ENCODE measurements at regions of chr1 and their contacts with region 1.

Region 1: GRCh38 chr1:51519048-51519864 is at the start of gene EPS15:
- DNase-seq: peak; percentile 70 to 78 (median 75)
- H3K4me3 ChIP-seq: peak within 1 kb of the TSS; percentile 72 to 96 (median 95)
- H3K4me3 Mint-ChIP-seq: peak within 1 kb of the TSS; percentile 92 to 98
- H3K27ac ChIP-seq: peak within 1 kb of the TSS; percentile 61 to 86
- H3K27ac Mint-ChIP-seq: peak within 1 kb of the TSS; percentile 88 to 98 (median 94)
- H3K4me1 ChIP-seq: peaks cover 21 to 42% of the 10 kb centered on the region in 2 donors
- H3K4me1 Mint-ChIP-seq: peaks cover 49% of the 10 kb centered on the region
- H3K27me3 ChIP-seq: no peaks in the 10 kb centered on the region
- H3K27me3 Mint-ChIP-seq: no peaks in the 10 kb centered on the region
- CTCF ChIP-seq: no peak
- polyA plus RNA-seq, gene EPS15: 26.7 to 53.6 (median 36.4) TPM

Region 2: GRCh38 chr1:50959913-50960844 is 559.1 kb before region 1 on chr1 and contains the start of gene FAF1:
- intact Hi-C with region 1: loop called in 1 of 2 experiments (anchors 10 kb)
- DNase-seq: peak; percentile 95 to 98 (median 96)
- H3K4me3 ChIP-seq: peak within 1 kb of the TSS; percentile 80 to 98 (median 81)
- H3K4me3 Mint-ChIP-seq: peak within 1 kb of the TSS; percentile 91 to 92
- H3K27ac ChIP-seq: peak within 1 kb of the TSS; percentile 72 to 83
- H3K27ac Mint-ChIP-seq: peak within 1 kb of the TSS; percentile 88 to 96 (median 92)
- H3K4me1 ChIP-seq: peaks cover 16 to 28% of the 10 kb centered on the region in 2 donors
- H3K4me1 Mint-ChIP-seq: peaks cover 23% of the 10 kb centered on the region
- H3K27me3 ChIP-seq: no peaks in the 10 kb centered on the region
- H3K27me3 Mint-ChIP-seq: peaks cover 0 to 2% (median 0%) of the 10 kb centered on the region in 3 donors
- CTCF ChIP-seq: no peak
- polyA plus RNA-seq, gene FAF1: 11.4 to 29.6 (median 16.9) TPM

Region 3: DNA sequence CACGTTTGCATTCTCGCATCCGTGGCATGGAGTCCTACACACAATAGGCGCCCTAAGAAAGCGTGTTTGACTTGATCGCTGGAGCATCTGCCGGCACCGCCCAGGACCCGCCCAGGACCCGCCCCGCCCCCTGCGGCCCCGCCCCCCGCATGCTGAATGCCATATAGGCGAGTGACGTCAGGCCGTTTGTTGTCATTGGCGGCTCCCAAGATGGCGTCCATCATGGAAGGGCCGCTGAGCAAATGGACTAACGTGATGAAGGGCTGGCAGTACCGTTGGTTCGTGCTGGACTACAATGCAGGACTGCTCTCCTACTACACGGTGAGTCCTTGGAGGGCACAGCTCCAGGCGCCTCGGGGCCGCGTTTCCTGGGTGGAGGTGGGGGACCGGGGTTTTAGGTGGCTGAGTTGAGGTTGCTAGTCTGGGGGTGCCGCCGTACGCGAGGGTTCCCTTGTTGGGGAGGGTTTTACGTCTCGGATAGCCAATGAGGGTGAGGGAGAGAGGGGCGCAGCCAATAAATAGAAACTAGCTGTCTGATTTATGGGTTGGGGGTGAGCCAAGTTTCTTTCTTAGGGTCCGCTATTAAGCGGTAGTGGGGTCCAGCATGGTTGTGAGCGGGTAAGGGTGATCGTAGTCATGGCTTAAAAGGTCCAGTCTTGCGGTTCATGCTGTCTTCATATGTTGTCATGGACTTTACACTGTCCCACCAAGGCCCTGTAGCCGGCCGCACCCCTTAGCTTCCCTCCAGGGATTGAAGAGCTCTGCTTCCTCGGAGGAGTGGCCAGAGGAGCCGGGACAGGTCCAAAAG is 97.8 kb after region 1 on chr1 and contains the start of gene OSBPL9:
- intact Hi-C with region 1: loop called in 1 of 2 experiments (anchors 5 kb)
- DNase-seq: peak; percentile 82 to 90 (median 89)
- H3K4me3 ChIP-seq: peak within 1 kb of the TSS; percentile 86 to 98 (median 96)
- H3K4me3 Mint-ChIP-seq: peak within 1 kb of the TSS; percentile 97 to 98
- H3K27ac ChIP-seq: peak within 1 kb of the TSS; percentile 63 to 93
- H3K27ac Mint-ChIP-seq: peak within 1 kb of the TSS; percentile 97 to 100 (median 98)
- H3K4me1 ChIP-seq: peaks cover 20 to 39% of the 10 kb centered on the region in 2 donors
- H3K4me1 Mint-ChIP-seq: peaks cover 41% of the 10 kb centered on the region
- H3K27me3 ChIP-seq: no peaks in the 10 kb centered on the region
- H3K27me3 Mint-ChIP-seq: peaks cover 0 to 2% (median 1%) of the 10 kb centered on the region in 3 donors
- CTCF ChIP-seq: no peak
- polyA plus RNA-seq, gene OSBPL9: 22.2 to 41.4 (median 31.3) TPM

Region 4: GRCh38 chr1:51878616-51879336 is 359.5 kb after region 1 on chr1 and contains the start of gene NRDC:
- intact Hi-C with region 1: loop called in 1 of 2 experiments (anchors 5 kb)
- DNase-seq: peak; percentile 99 to 100 (median 100)
- H3K4me3 ChIP-seq: peak within 1 kb of the TSS; percentile 95 to 100 (median 97)
- H3K4me3 Mint-ChIP-seq: no peak within 1 kb of the TSS
- H3K27ac ChIP-seq: peak within 1 kb of the TSS; percentile 96 to 99
- H3K27ac Mint-ChIP-seq: no peak within 1 kb of the TSS
- H3K4me1 ChIP-seq: peaks cover 29 to 41% of the 10 kb centered on the region in 2 donors
- H3K4me1 Mint-ChIP-seq: peaks cover 26% of the 10 kb centered on the region
- H3K27me3 ChIP-seq: no peaks in the 10 kb centered on the region
- H3K27me3 Mint-ChIP-seq: peaks cover 8 to 13% (median 12%) of the 10 kb centered on the region in 3 donors
- CTCF ChIP-seq: no peak
- polyA plus RNA-seq, gene NRDC: 66.8 to 92.0 (median 74.3) TPM

Measured in CD14-positive monocyte (primary cell).